Mucosa of descending colon (tissue), 3 donors: ENCODE measurements at regions of chr6 and their contacts with region 1.

Region 1: DNA sequence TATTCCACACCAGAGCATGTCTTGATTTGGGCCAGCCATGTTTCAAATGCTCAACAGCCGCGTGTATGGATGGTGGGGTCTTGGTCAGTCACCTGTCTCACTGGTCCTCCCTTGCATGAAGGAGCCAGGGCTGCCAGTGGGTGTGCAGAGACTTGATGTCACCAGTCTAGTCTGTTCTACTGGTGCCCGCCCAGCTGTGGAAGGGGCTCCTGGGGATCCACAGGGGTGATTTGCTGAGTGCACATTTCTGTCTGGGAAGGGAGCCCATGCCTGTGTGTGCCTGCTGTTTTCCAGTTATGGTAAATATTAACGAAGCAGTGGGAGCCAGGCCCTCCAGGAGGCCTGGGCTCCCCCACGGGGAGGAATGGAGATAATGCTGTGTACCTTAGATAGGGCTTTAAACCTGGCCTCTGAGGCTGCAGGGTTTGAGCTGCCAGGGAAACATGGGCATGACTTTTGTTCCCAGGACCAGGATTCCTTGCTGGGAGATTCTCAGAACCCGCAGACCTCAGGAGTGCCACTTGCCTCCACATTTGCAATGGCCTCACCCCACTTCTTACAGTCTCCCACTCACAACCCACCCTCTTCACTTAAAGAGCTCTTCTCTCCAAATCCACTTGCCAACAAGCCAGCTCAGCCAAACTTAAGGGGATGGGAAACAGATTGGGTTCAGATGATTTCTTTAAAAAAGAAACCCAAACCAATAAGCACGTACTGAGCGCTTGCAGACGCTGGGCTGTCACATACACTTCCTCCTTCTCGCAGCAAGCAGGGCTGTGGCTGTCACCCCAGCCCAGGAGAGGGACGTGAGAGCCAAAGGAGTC is 54.1 kb downstream of the VEGFA start:
- DNase-seq: peak in 2 of 3 donors; percentile 56 to 58
- ATAC-seq: peak; percentile 90
- H3K4me3 ChIP-seq: no peak overlapping the region
- H3K4me1 ChIP-seq: peaks cover 18% of the 10 kb centered on the region
- CTCF ChIP-seq: no peak

Region 2: DNA sequence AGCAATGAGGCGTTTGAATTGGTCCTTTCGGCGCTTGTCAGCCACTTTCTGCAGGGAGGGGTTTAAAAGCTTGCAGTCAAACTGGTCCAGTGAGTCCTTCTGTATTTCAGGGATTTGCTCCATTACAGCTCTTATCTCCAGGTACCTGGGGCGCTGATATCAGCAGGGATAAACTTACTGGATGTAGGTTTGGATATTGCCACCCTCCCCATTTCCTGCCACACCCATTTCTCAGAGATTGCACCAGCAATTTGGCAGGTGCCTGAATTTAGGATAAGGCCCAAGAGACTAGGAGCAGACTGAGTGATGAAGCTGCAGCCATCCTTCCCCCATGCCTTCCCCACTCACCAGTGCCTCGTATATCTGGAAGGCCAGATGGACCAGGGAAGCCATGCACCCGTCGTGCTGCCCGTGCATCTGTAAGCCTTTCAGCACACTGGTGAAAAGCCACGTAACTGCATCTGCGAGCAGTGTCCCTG is 299.6 kb before region 1 on chr6:
- intact Hi-C with region 1: no loop called
- DNase-seq: no peak
- ATAC-seq: peak; percentile 30
- H3K4me3 ChIP-seq: no peak overlapping the region
- H3K4me1 ChIP-seq: no peaks in the 10 kb centered on the region
- CTCF ChIP-seq: no peak

Region 3: GRCh38 chr6:43769526-43770416 is 54.3 kb before region 1 on chr6 and contains the start of gene VEGFA:
- intact Hi-C with region 1: loop called in 1 of 2 experiments (anchors 10 kb)
- DNase-seq: peak; percentile 91 to 95 (median 93)
- ATAC-seq: peak; percentile 68
- H3K4me3 ChIP-seq: peak within 1 kb of the TSS; percentile 81
- H3K4me1 ChIP-seq: peaks cover 34% of the 10 kb centered on the region
- CTCF ChIP-seq: peak; percentile 89
- total RNA-seq, gene VEGFA: 89.4 to 165 (median 94.7) TPM

Region 4: DNA sequence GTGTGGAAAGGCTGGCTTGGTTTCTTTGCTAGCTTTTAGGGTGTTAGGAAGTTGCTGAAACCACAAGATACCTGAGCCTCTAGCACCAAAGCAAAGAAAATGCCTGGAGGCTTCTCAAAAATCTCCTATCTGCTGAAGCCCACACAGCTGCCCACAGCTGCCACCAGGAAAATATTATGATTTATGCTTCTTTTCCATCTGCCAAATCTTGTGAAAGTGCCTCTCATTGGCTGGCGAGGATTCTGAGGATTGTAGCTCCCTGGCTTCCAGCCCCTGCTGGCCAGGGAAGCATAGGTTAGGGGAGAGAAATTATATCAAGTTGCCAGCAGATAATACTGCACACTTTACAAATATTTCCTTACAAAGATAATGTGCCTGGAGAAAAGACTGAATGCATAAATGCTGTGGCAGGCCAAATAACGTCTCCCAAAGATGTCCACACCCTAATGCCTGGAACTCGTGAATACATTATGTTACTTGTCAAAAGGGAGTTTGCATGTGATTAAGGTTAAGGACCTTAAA is 204.8 kb after region 1 on chr6:
- intact Hi-C with region 1: no loop called
- DNase-seq: no peak
- ATAC-seq: no peak
- H3K4me3 ChIP-seq: no peak overlapping the region
- H3K4me1 ChIP-seq: no peaks in the 10 kb centered on the region
- CTCF ChIP-seq: no peak